AG04449 (cell line): ENCODE measurements at regions of chr2 and their contacts with region 1.

Region 1: DNA sequence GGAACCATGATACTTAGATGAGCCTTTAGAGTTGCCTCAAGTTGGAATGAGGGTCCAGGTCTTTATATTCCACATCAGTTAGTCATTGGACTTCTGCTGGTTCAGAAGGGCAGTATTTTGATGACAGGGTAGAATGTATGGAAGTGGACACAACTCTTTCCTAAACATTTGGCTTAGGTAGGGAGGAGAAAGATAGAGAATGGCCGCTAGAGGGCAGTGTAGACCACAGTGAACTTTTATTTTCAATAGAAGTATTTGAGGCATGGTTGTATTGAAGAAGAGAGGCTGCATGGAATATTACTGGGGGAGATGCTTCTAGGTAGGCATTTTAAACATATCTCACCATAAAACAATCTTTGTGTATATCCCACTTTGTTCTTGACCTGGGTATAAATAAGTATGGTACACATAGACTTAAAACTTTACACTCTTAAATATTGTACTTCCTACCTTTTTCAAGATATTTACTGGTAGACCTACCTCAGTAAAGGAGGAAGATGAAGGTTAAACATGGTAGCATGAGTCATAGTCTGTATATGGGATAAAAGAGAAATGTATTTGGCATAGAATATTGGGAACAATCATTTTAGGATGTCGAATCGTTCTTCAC is 497.6 kb upstream of the FAM98A start:
- DNase-seq: peak; percentile 19
- H3K4me3 ChIP-seq: no peak overlapping the region
- CTCF ChIP-seq: peak; percentile 48

Region 2: GRCh38 chr2:34121076-34121475 is 24.4 kb after region 1 on chr2:
- CTCF ChIA-PET with region 1: no interaction called
- POLR2A ChIA-PET with region 1: no interaction called
- DNase-seq: no peak
- H3K4me3 ChIP-seq: no peak overlapping the region
- CTCF ChIP-seq: no peak

Region 3: DNA sequence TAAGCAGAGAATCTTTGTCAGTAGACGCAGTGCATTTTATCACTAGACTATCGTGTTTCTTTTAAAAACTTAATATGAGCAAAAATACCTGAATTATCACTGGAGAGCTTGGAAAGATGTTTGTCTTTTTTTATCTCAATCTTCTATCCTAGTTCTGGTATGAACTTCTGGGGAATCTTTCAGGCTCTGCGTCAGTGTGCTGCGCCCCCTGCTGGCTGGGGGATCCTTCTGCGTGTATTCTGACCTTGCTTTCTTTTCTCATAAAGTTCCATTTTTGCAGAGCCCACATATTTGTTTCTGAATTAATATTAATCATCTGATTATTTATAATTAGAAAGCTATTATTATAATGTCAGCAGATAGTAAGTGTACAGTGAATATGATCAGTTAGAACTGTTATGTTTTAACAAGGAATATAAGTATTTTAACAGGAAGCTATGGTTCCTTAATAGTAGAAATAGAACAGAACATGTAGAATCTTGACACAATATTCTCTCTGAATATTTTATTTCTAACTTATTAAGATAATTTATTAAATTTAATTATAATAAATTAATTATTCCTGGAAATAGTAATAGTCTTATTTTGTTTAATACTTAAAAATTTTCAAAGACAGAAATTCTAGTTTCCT is 1313.9 kb after region 1 on chr2:
- CTCF ChIA-PET with region 1: interaction called, 20 read pairs
- POLR2A ChIA-PET with region 1: no interaction called
- DNase-seq: no peak
- H3K4me3 ChIP-seq: no peak overlapping the region
- CTCF ChIP-seq: peak; percentile 63